OCI-LY7 (cell line): ENCODE measurements at regions of chr3 and their contacts with region 1.

Region 1: GRCh38 chr3:151086484-151087456 is 1.3 kb downstream of the MED12L start:
- DNase-seq: peak; percentile 92
- H3K4me3 ChIP-seq: peak overlapping the region; percentile 88
- H3K27ac ChIP-seq: peak overlapping the region; percentile 71
- H3K4me1 ChIP-seq: peaks cover 25% of the 10 kb centered on the region
- CTCF ChIP-seq: peak; percentile 60

Region 2: DNA sequence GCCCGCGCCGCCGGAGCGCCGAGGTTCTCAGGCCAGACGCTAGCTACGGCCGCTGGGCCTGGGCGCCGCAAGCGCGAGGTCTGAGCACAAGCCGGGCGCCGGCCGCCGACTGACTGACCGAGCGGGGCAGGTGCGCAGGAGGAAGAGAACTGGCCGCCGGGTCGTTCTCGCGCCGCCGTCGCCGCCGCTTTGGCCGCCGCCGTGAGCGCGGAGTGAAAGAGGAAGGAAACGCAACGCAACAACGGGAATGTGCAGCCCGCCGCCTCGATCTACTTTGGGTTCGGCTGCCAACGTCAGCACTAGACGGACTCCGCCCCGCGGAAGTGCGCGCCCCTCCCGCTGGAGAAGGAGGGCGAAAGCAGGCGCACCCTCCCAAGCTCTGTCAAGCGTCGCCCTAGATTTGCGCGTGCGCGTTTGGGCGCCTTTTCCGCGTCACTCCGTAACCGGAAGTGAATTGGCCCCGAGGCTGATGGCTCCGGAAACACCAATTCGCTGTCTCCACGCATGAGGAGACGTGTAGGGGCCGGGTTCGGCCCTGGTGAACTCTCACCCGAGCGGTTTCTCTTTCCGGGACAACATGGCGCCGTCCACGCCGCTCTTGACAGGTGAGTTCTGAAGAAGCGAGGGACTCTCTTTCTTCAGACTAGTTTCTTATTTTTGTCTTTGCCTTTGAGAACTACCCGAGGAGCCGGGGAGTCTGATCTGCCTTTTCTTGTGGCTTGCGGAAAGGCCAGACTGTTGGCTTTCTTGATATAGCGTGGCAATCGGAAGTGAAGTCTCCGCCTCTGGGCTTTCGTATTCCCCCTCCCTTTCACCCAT is 540.3 kb before region 1 on chr3 and contains the starts of genes EIF2A and SERP1:
- CTCF ChIA-PET with region 1: no interaction called
- POLR2A ChIA-PET with region 1: interaction called, 3 read pairs
- intact Hi-C with region 1: loop called (anchors 1 kb)
- DNase-seq: peak; percentile 99
- H3K4me3 ChIP-seq: peak within 1 kb of the TSS; percentile 98
- H3K27ac ChIP-seq: peak within 1 kb of the TSS; percentile 81
- H3K4me1 ChIP-seq: peaks cover 40% of the 10 kb centered on the region
- CTCF ChIP-seq: no peak
- total RNA-seq, gene EIF2A: 85.6 and 86.0 TPM in 2 replicates
- total RNA-seq, gene SERP1: 182 and 183 TPM in 2 replicates

Region 3: GRCh38 chr3:150721285-150722130 is 365.3 kb before region 1 on chr3:
- CTCF ChIA-PET with region 1: no interaction called
- POLR2A ChIA-PET with region 1: no interaction called
- intact Hi-C with region 1: loop called (anchors 5 kb)
- DNase-seq: peak; percentile 76
- H3K4me3 ChIP-seq: no peak overlapping the region
- H3K27ac ChIP-seq: no peak overlapping the region
- H3K4me1 ChIP-seq: peaks cover 11% of the 10 kb centered on the region
- CTCF ChIP-seq: peak; percentile 95

Region 4: GRCh38 chr3:150925751-150926201 is 161.0 kb before region 1 on chr3:
- CTCF ChIA-PET with region 1: no interaction called
- POLR2A ChIA-PET with region 1: no interaction called
- intact Hi-C with region 1: loop called (anchors 5 kb)
- DNase-seq: peak; percentile 47
- H3K4me3 ChIP-seq: no peak overlapping the region
- H3K27ac ChIP-seq: no peak overlapping the region
- H3K4me1 ChIP-seq: no peaks in the 10 kb centered on the region
- CTCF ChIP-seq: peak; percentile 81

Region 5: DNA sequence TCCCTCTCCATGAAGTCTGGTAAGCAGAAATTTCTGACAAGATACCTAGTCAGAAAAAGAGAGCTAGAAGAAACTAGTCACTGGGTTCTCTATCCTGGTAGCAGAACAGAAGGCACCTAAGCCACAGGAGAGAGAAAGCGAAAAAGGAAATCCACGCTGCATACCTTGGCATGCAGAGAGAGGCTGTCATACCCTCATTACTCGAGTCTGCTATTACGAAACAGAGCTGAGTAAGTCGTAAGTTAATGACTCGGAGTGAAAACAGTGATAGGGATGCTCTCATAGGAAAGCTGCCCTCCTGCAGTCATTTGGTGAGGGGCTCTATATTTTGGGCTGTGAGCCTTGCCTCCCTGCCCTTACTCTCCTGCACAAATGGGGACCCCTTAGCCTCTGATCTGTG is 130.4 kb before region 1 on chr3:
- CTCF ChIA-PET with region 1: no interaction called
- POLR2A ChIA-PET with region 1: no interaction called
- intact Hi-C with region 1: no loop called
- DNase-seq: no peak
- H3K4me3 ChIP-seq: no peak overlapping the region
- H3K27ac ChIP-seq: no peak overlapping the region
- H3K4me1 ChIP-seq: no peaks in the 10 kb centered on the region
- CTCF ChIP-seq: no peak

Region 6: DNA sequence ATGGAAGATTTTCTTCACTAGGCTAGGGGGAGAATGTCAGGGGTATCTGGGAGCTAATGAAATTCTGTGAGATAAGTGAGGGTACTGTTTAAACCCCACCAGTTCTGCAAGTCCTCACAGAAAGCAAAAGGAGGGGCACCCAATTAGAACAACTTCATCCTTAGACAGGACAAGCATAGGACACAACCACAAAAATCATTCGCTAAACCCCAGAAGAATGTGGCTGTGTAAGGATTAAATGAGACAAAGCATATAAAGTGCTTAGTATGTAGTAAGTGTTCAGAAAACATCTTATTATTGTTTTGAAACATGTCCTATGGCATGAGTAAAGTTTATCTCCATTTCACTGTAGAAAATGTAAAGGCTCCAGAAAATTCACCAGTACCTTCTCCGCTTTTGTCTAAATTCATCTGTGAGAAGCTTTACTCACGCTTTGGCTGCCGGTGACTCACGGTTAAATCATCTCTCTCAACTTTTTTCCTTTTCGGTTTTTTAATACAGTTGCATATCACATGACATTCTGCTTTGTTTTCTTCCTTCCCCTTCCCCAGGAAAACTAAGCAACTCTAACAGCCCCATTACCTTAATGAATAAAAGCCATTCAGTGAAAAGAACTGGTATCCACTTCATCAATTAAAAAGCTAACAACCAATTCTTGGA is 116.0 kb before region 1 on chr3:
- CTCF ChIA-PET with region 1: no interaction called
- POLR2A ChIA-PET with region 1: no interaction called
- intact Hi-C with region 1: no loop called
- DNase-seq: no peak
- H3K4me3 ChIP-seq: no peak overlapping the region
- H3K27ac ChIP-seq: no peak overlapping the region
- H3K4me1 ChIP-seq: no peaks in the 10 kb centered on the region
- CTCF ChIP-seq: no peak

Region 7: GRCh38 chr3:151276687-151277042 is 189.9 kb after region 1 on chr3:
- CTCF ChIA-PET with region 1: no interaction called
- POLR2A ChIA-PET with region 1: no interaction called
- intact Hi-C with region 1: loop called (anchors 5 kb)
- DNase-seq: peak; percentile 8
- H3K4me3 ChIP-seq: no peak overlapping the region
- H3K27ac ChIP-seq: no peak overlapping the region
- H3K4me1 ChIP-seq: peaks cover 42% of the 10 kb centered on the region
- CTCF ChIP-seq: no peak